Heart right ventricle (tissue), 16 donors: ENCODE measurements at regions of chr11 and their contacts with region 1.

Region 1: GRCh38 chr11:95849087-95849825 is 59.0 kb downstream of the CEP57 start:
- DNase-seq: peak in 1 of 2 donors; percentile 55
- ATAC-seq: peak; percentile 76 to 97 (median 92)
- H3K4me3 ChIP-seq: no peak overlapping the region
- H3K27ac ChIP-seq: peak overlapping the region in 3 of 10 donors; percentile 8 to 42 (median 33)
- H3K4me1 ChIP-seq: peaks cover 0 to 13% (median 0%) of the 10 kb centered on the region in 9 donors
- H3K27me3 ChIP-seq: no peaks in the 10 kb centered on the region
- CTCF ChIP-seq: peak; percentile 15 to 71 (median 59)

Region 2: DNA sequence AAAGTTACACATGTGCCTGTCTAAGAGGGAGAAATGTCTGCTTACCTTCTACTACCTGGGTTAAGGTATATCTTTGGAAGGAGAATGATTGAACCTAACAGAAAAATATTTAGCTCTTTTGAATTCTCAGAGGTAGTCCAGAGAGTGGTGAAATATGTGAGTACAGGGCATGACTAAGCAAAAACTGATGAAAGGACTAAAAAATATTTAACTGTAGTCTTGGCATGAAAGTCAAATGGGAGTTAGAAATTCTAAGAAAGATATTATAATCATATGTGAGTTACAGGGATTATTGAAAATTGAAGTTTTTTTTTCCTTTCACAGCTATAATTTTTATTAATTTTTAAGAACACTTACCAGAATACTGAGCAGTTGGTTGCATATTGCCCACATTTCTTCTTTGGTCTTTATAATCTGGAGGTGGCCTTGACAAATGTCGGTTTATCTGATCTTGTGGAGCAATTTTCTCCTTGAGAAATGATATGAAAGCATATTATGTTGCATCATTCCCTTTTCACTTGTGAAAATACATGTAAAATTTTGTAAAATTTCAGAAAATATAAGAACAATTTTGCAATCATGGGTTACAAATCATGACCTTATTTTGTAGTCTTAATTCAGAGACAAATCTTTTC is 136.0 kb after region 1 on chr11:
- intact Hi-C with region 1: loop called in 1 of 10 experiments (anchors 10 kb)
- DNase-seq: no peak
- ATAC-seq: no peak
- H3K4me3 ChIP-seq: no peak overlapping the region
- H3K27ac ChIP-seq: no peak overlapping the region
- H3K4me1 ChIP-seq: no peaks in the 10 kb centered on the region
- H3K27me3 ChIP-seq: no peaks in the 10 kb centered on the region
- CTCF ChIP-seq: no peak

Region 3: DNA sequence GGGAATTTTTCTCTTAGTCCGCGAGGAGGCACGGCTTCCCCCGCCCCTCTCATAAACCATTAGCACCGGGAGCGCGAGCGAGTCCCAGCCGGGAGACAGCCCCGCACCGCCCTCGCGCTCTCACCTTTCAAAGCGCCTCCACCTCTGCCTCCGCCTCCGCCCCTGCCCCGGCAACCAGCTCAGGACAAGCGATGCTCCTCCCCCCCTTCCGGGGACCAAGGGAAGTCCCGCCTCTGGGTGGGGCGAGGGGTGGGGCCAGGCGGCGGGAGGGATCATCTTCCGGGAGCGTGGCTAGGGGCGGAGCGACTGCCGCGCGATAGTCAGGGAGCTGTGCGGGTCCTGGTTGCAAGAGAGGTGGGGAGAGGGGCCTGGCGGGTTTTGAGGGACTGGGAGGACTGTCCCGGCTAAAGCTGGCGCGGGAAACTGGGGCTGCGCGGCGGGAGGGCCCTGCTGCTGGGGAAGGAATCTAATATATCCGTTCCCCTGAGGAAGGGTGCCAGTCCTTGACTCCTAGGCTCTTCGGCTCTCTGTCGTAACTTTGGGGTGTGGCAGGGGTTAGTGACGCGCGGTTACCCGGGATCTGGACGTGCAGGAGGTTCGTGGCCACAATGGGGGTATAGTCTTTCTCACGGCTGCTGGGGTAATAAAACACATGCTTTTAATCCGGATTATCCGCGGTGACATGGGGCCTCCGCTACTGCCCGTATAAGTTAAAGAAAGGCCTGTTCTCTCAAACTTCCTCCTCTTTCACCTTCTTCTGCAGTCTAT is 540.6 kb after region 1 on chr11 and contains the starts of genes CCDC82 and JRKL:
- intact Hi-C with region 1: loop called in 1 of 10 experiments (anchors 10 kb)
- DNase-seq: peak; percentile 97
- ATAC-seq: peak; percentile 99 to 100 (median 100)
- H3K4me3 ChIP-seq: peak within 1 kb of the TSS; percentile 62 to 97 (median 88)
- H3K27ac ChIP-seq: peak within 1 kb of the TSS; percentile 44 to 93 (median 88)
- H3K4me1 ChIP-seq: peaks cover 0 to 46% (median 24%) of the 10 kb centered on the region in 9 donors
- H3K27me3 ChIP-seq: no peaks in the 10 kb centered on the region
- CTCF ChIP-seq: no peak
- total RNA-seq, gene CCDC82: 10.9 to 15.3 (median 13.1) TPM
- total RNA-seq, gene JRKL: 4.7 to 7.5 (median 6.1) TPM

Region 4: DNA sequence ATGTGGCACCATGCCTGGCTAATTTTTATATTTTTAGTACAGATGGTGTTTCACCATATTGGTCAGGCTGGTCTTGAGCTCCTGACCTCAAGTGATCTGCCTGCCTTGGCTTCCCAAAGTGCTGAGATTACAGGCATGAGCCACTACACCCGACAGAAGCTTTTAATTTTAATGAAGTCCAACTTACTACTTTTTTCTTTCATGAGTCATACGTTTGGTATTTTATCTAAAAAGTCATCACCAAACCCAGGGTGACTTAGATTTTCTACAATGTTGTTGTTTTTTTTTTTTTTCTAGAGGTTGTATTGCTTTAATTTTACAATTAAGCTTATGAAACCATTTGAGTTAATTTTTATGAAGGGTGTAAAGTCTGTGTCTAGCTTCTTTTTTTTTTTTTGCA is 575.4 kb after region 1 on chr11:
- intact Hi-C with region 1: loop called in 1 of 10 experiments (anchors 10 kb)
- DNase-seq: no peak
- ATAC-seq: no peak
- H3K4me3 ChIP-seq: no peak overlapping the region
- H3K27ac ChIP-seq: no peak overlapping the region
- H3K4me1 ChIP-seq: no peaks in the 10 kb centered on the region
- H3K27me3 ChIP-seq: peaks cover 0 to 72% (median 12%) of the 10 kb centered on the region in 7 donors
- CTCF ChIP-seq: no peak